ENCODE measurements at regions of chr18 and their contacts with region 1.

Region 1: GRCh38 chr18:47175908-47176575 is at the start of gene IER3IP1:
- DNase-seq: peak; percentile 93
- H3K4me3 ChIP-seq: peak within 1 kb of the TSS; percentile 95 to 97 (median 95)
- H3K27ac ChIP-seq: peak within 1 kb of the TSS; percentile 64
- H3K4me1 ChIP-seq: peaks cover 17% of the 10 kb centered on the region
- H3K27me3 ChIP-seq: peaks cover 3% of the 10 kb centered on the region in 2 experiments
- CTCF ChIP-seq: no peak
- POLR2A ChIP-seq: peak; percentile 74
- total RNA-seq, gene IER3IP1: 14.2 and 16.4 TPM in 2 replicates

Region 2: GRCh38 chr18:47150029-47150823 is 25.8 kb before region 1 on chr18 and contains the start of gene HDHD2:
- CTCF ChIA-PET with region 1: interaction called, 3 read pairs
- POLR2A ChIA-PET with region 1: no interaction called
- dilution Hi-C with region 1: no loop called
- intact Hi-C with region 1: loop called (anchors 1 kb)
- DNase-seq: peak; percentile 82
- H3K4me3 ChIP-seq: peak within 1 kb of the TSS; percentile 45 to 72 (median 57)
- H3K27ac ChIP-seq: peak within 1 kb of the TSS; percentile 63
- H3K4me1 ChIP-seq: peaks cover 15% of the 10 kb centered on the region
- H3K27me3 ChIP-seq: no peaks in the 10 kb centered on the region
- CTCF ChIP-seq: no peak
- POLR2A ChIP-seq: peak; percentile 95
- total RNA-seq, gene HDHD2: 13.7 and 18.7 TPM in 2 replicates